CD8-positive, alpha-beta T cell (primary cell): ENCODE measurements at regions of chr1 and their contacts with region 1.

Region 1: GRCh38 chr1:113963281-113963906 is 15.9 kb upstream of the OLFML3 start:
- DNase-seq: peak in 2 of 9 experiments; percentile 28 to 59
- ATAC-seq: peak; percentile 61
- H3K4me3 ChIP-seq: no peak overlapping the region
- H3K4me3 Mint-ChIP-seq: no peak overlapping the region
- H3K27ac ChIP-seq: no peak overlapping the region
- H3K27ac Mint-ChIP-seq: peak overlapping the region; percentile 57
- H3K4me1 ChIP-seq: no peaks in the 10 kb centered on the region
- H3K4me1 Mint-ChIP-seq: peaks cover 38% of the 10 kb centered on the region
- H3K27me3 ChIP-seq: no peaks in the 10 kb centered on the region
- H3K27me3 Mint-ChIP-seq: no peaks in the 10 kb centered on the region
- CTCF ChIP-seq: no peak

Region 2: GRCh38 chr1:113133038-113133437 is 830.4 kb before region 1 on chr1:
- CTCF ChIA-PET with region 1: no interaction called
- POLR2A ChIA-PET with region 1: no interaction called
- intact Hi-C with region 1: loop called in 1 of 2 experiments (anchors 10 kb)
- DNase-seq: peak in 1 of 9 experiments; percentile 20
- ATAC-seq: no peak
- H3K4me3 ChIP-seq: no peak overlapping the region
- H3K4me3 Mint-ChIP-seq: no peak overlapping the region
- H3K27ac ChIP-seq: no peak overlapping the region
- H3K27ac Mint-ChIP-seq: no peak overlapping the region
- H3K4me1 ChIP-seq: no peaks in the 10 kb centered on the region
- H3K4me1 Mint-ChIP-seq: no peaks in the 10 kb centered on the region
- H3K27me3 ChIP-seq: no peaks in the 10 kb centered on the region
- H3K27me3 Mint-ChIP-seq: no peaks in the 10 kb centered on the region
- CTCF ChIP-seq: no peak

Region 3: GRCh38 chr1:113605146-113605545 is 358.2 kb before region 1 on chr1:
- CTCF ChIA-PET with region 1: no interaction called
- POLR2A ChIA-PET with region 1: no interaction called
- intact Hi-C with region 1: no loop called
- DNase-seq: no peak
- ATAC-seq: no peak
- H3K4me3 ChIP-seq: no peak overlapping the region
- H3K4me3 Mint-ChIP-seq: no peak overlapping the region
- H3K27ac ChIP-seq: no peak overlapping the region
- H3K27ac Mint-ChIP-seq: no peak overlapping the region
- H3K4me1 ChIP-seq: no peaks in the 10 kb centered on the region
- H3K4me1 Mint-ChIP-seq: no peaks in the 10 kb centered on the region
- H3K27me3 ChIP-seq: no peaks in the 10 kb centered on the region
- H3K27me3 Mint-ChIP-seq: no peaks in the 10 kb centered on the region
- CTCF ChIP-seq: no peak

Region 4: GRCh38 chr1:113765306-113766230 is 197.8 kb before region 1 on chr1:
- CTCF ChIA-PET with region 1: no interaction called
- POLR2A ChIA-PET with region 1: no interaction called
- intact Hi-C with region 1: no loop called
- DNase-seq: no peak
- ATAC-seq: no peak
- H3K4me3 ChIP-seq: no peak overlapping the region
- H3K4me3 Mint-ChIP-seq: no peak overlapping the region
- H3K27ac ChIP-seq: no peak overlapping the region
- H3K27ac Mint-ChIP-seq: peak overlapping the region; percentile 38
- H3K4me1 ChIP-seq: peaks cover 3% of the 10 kb centered on the region
- H3K4me1 Mint-ChIP-seq: peaks cover 28% of the 10 kb centered on the region
- H3K27me3 ChIP-seq: no peaks in the 10 kb centered on the region
- H3K27me3 Mint-ChIP-seq: no peaks in the 10 kb centered on the region
- CTCF ChIP-seq: no peak

Region 5: GRCh38 chr1:113835642-113836307 is 127.6 kb before region 1 on chr1:
- CTCF ChIA-PET with region 1: interaction called, 25 read pairs
- POLR2A ChIA-PET with region 1: interaction called, 3 read pairs
- intact Hi-C with region 1: loop called (anchors 2 kb)
- DNase-seq: peak in 4 of 9 experiments; percentile 17 to 77 (median 54)
- ATAC-seq: no peak
- H3K4me3 ChIP-seq: no peak overlapping the region
- H3K4me3 Mint-ChIP-seq: no peak overlapping the region
- H3K27ac ChIP-seq: no peak overlapping the region
- H3K27ac Mint-ChIP-seq: no peak overlapping the region
- H3K4me1 ChIP-seq: no peaks in the 10 kb centered on the region
- H3K4me1 Mint-ChIP-seq: peaks cover 7% of the 10 kb centered on the region
- H3K27me3 ChIP-seq: no peaks in the 10 kb centered on the region
- H3K27me3 Mint-ChIP-seq: no peaks in the 10 kb centered on the region
- CTCF ChIP-seq: peak; percentile 86

Region 6: DNA sequence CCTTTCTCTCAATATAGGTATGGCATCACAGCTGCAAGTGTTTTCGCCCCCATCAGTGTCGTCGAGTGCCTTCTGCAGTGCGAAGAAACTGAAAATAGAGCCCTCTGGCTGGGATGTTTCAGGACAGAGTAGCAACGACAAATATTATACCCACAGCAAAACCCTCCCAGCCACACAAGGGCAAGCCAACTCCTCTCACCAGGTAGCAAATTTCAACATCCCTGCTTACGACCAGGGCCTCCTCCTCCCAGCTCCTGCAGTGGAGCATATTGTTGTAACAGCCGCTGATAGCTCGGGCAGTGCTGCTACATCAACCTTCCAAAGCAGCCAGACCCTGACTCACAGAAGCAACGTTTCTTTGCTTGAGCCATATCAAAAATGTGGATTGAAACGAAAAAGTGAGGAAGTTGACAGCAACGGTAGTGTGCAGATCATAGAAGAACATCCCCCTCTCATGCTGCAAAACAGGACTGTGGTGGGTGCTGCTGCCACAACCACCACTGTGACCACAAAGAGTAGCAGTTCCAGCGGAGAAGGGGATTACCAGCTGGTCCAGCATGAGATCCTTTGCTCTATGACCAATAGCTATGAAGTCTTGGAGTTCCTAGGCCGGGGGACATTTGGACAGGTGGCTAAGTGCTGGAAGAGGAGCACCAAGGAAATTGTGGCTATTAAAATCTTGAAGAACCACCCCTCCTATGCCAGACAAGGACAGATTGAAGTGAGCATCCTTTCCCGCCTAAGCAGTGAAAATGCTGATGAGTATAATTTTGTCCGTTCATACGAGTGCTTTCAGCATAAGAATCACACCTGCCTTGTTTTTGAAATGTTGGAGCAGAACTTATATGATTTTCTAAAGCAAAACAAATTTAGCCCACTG is 22.8 kb before region 1 on chr1:
- CTCF ChIA-PET with region 1: interaction called, 4 read pairs
- POLR2A ChIA-PET with region 1: interaction called, 4 read pairs
- intact Hi-C with region 1: loop called in 1 of 2 experiments (anchors 2 kb)
- DNase-seq: peak; percentile 10 to 86 (median 54)
- ATAC-seq: peak; percentile 60
- H3K4me3 ChIP-seq: peak overlapping the region; percentile 15 to 16
- H3K4me3 Mint-ChIP-seq: peak overlapping the region; percentile 78
- H3K27ac ChIP-seq: peak overlapping the region; percentile 31 to 71
- H3K27ac Mint-ChIP-seq: peak overlapping the region; percentile 91
- H3K4me1 ChIP-seq: peaks cover 77% of the 10 kb centered on the region
- H3K4me1 Mint-ChIP-seq: peaks cover 78% of the 10 kb centered on the region
- H3K27me3 ChIP-seq: no peaks in the 10 kb centered on the region
- H3K27me3 Mint-ChIP-seq: no peaks in the 10 kb centered on the region
- CTCF ChIP-seq: no peak